ENCODE measurements at regions of chr6 and their contacts with region 1.

Region 1: GRCh38 chr6:113994918-113995342 is 24.0 kb upstream of the HDAC2 start:
- DNase-seq: no peak
- H3K4me3 ChIP-seq: no peak overlapping the region
- H3K27ac ChIP-seq: peak overlapping the region; percentile 71 to 72
- H3K4me1 ChIP-seq: peaks cover 0 to 23% of the 10 kb centered on the region in 2 donors
- H3K27me3 ChIP-seq: no peaks in the 10 kb centered on the region
- CTCF ChIP-seq: peak; percentile 33 to 61 (median 44)

Region 2: DNA sequence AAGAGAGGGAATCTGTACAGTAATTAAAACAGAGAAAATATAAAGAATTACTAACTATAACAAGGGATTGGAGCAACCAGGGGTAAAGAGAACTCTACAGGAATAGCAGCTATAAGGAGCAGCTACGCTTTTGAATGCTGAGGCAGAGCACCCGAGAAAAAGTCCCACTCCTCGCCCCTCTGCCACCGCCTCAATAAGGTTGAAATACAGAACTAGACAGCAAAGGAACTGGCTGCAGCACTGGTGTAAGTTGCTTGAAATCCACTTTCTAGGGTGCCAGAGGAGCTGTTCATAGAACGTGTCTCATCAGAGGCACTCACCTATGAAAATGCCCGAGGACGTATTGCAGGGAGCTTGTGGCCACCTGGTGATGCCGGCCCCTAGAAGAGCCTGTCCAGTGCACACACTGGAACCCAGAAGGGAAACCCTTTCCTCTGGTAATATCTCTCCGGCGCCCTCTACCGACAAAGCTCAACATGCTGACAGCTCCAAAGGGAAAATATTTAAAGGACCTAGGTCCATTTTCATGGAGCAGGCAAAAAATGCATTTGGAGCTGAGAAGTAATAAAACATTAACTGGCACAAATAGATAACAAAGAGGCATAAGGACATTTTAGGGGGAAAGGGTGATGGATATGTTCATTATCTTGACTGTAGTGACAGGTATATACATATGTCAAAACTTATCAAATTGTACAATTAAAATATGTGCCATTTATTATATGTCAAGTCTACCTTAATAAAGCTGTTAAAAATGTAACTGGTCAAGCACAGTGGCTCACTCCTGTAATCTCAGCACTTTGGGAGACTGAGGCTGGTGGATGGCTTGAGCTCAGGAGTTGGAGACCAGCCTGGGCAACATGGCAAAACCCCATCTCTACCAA is 113.4 kb after region 1 on chr6:
- intact Hi-C with region 1: loop called (anchors 2 kb)
- DNase-seq: peak in 1 of 2 donors; percentile 77
- H3K4me3 ChIP-seq: no peak overlapping the region
- H3K27ac ChIP-seq: no peak overlapping the region
- H3K4me1 ChIP-seq: no peaks in the 10 kb centered on the region
- H3K27me3 ChIP-seq: no peaks in the 10 kb centered on the region
- CTCF ChIP-seq: peak; percentile 20 to 65 (median 38)